CD4-positive, alpha-beta T cell (primary cell): ENCODE measurements at regions of chr17 and their contacts with region 1.

Region 1: DNA sequence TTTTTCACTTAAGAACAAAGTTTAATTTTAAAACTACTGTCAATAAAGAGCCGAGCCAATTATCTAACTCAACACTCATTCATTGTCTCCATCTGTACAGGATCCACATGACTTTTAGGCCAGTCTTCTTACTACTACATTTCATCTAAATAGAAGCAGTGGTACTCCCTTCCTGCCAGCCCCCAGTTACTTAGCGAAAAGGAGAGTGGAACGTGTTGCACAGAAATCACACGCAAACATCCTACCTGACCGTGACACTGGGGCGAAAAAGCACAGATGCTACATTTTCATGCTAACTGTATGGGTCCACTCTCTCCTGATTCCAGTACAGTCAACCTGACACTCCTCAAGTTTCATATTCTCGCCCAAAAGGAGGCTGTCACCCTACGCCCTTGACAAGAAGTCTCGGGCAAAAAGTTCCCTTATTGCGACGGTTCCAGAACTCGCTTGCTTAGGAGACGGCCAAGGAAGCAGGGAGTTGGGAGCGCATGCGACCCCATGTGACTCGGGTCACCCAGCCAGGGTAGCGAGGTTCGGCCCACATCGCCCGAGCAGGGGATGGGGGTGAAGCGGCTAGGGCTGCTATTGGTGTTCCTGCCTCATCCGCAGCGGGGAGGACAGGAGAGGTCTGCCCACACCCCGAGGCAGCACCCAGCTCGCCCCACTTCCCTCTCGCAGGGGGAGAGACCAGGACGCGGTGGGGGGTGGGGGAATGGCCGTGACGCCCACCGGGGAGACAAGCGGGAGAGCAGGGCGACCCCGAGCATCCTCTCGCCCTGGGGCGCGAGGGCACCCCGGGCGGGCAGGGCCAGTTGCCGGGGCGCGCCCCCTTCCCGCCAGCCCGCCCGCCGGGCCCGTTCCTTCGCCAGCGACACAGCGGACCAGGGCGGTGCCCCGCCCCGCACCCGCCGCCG is 935 bp downstream of the GNA13 start:
- DNase-seq: peak; percentile 26 to 72 (median 49)
- ATAC-seq: peak; percentile 31
- H3K4me3 ChIP-seq: peak overlapping the region; percentile 96
- H3K4me3 Mint-ChIP-seq: peak overlapping the region; percentile 99
- H3K27ac ChIP-seq: peak overlapping the region; percentile 95 to 96
- H3K27ac Mint-ChIP-seq: peak overlapping the region; percentile 97
- H3K4me1 ChIP-seq: peaks cover 32% of the 10 kb centered on the region
- H3K4me1 Mint-ChIP-seq: peaks cover 50% of the 10 kb centered on the region
- H3K27me3 ChIP-seq: no peaks in the 10 kb centered on the region
- H3K27me3 Mint-ChIP-seq: no peaks in the 10 kb centered on the region
- CTCF ChIP-seq: no peak

Region 2: GRCh38 chr17:64920026-64920418 is 135.6 kb before region 1 on chr17:
- CTCF ChIA-PET with region 1: no interaction called
- POLR2A ChIA-PET with region 1: interaction called, 7 read pairs
- intact Hi-C with region 1: loop called in 1 of 2 experiments (anchors 5 kb)
- DNase-seq: peak in 2 of 14 experiments; percentile 14 to 39
- ATAC-seq: no peak
- H3K4me3 ChIP-seq: peak overlapping the region; percentile 60
- H3K4me3 Mint-ChIP-seq: peak overlapping the region; percentile 91
- H3K27ac ChIP-seq: peak overlapping the region in 1 of 2 donors; percentile 65
- H3K27ac Mint-ChIP-seq: peak overlapping the region; percentile 83
- H3K4me1 ChIP-seq: peaks cover 13% of the 10 kb centered on the region
- H3K4me1 Mint-ChIP-seq: no peaks in the 10 kb centered on the region
- H3K27me3 ChIP-seq: no peaks in the 10 kb centered on the region
- H3K27me3 Mint-ChIP-seq: no peaks in the 10 kb centered on the region
- CTCF ChIP-seq: no peak

Region 3: GRCh38 chr17:64975329-64976087 is 80.1 kb before region 1 on chr17:
- CTCF ChIA-PET with region 1: no interaction called
- POLR2A ChIA-PET with region 1: interaction called, 65 read pairs
- intact Hi-C with region 1: loop called (anchors 2 kb)
- DNase-seq: peak; percentile 93 to 100 (median 97)
- ATAC-seq: peak; percentile 77
- H3K4me3 ChIP-seq: peak overlapping the region; percentile 84
- H3K4me3 Mint-ChIP-seq: peak overlapping the region; percentile 93
- H3K27ac ChIP-seq: peak overlapping the region; percentile 98 to 99
- H3K27ac Mint-ChIP-seq: peak overlapping the region; percentile 99
- H3K4me1 ChIP-seq: peaks cover 37% of the 10 kb centered on the region
- H3K4me1 Mint-ChIP-seq: peaks cover 45% of the 10 kb centered on the region
- H3K27me3 ChIP-seq: no peaks in the 10 kb centered on the region
- H3K27me3 Mint-ChIP-seq: no peaks in the 10 kb centered on the region
- CTCF ChIP-seq: no peak

Region 4: DNA sequence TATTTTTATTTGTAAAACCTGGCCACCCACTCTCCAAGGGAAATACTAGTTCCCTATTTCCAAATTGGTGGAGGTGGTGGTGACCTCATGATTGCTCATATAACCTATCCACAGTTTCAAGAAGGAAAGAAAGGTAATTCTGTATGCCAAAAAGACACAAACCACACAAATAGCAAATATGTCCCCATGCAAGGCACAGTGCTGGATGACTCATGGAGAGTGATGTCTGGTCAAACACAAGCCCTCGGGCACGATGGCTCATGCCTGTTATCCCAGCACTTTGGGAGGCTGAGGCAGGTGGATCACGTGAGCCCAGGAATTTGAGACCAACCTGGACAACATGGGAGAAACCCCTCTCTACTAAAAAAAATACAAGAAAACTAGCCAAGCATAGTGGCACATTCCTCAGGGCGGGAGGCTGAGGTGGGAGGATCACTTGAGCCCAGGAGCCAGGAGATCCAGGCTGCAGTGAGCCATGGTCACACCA is 63.2 kb before region 1 on chr17:
- CTCF ChIA-PET with region 1: no interaction called
- POLR2A ChIA-PET with region 1: no interaction called
- intact Hi-C with region 1: no loop called
- DNase-seq: no peak
- ATAC-seq: no peak
- H3K4me3 ChIP-seq: no peak overlapping the region
- H3K4me3 Mint-ChIP-seq: no peak overlapping the region
- H3K27ac ChIP-seq: no peak overlapping the region
- H3K27ac Mint-ChIP-seq: no peak overlapping the region
- H3K4me1 ChIP-seq: no peaks in the 10 kb centered on the region
- H3K4me1 Mint-ChIP-seq: no peaks in the 10 kb centered on the region
- H3K27me3 ChIP-seq: no peaks in the 10 kb centered on the region
- H3K27me3 Mint-ChIP-seq: no peaks in the 10 kb centered on the region
- CTCF ChIP-seq: no peak

Region 5: DNA sequence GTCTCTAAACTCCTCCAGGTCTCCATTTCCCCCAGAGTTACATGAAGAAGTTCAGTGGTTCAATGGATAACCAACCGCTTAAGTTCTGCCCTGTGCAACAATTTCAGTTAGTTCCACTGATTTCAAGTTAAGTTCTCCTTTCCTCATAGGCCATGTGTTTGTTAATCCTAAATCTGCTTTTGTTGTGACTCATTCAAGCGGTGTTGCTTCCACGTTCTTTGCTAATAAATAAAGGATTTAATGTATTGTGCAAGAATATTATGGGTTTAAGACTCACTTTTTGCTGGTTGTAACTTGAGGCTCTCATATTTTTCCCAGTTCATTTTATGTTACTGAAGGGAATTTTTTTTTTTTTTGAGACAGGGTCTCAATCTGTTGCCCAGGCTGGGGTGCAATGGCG is 35.3 kb before region 1 on chr17:
- CTCF ChIA-PET with region 1: no interaction called
- POLR2A ChIA-PET with region 1: interaction called, 5 read pairs
- intact Hi-C with region 1: loop called in 1 of 2 experiments (anchors 5 kb)
- DNase-seq: peak in 2 of 14 experiments; percentile 32 to 44
- ATAC-seq: no peak
- H3K4me3 ChIP-seq: no peak overlapping the region
- H3K4me3 Mint-ChIP-seq: no peak overlapping the region
- H3K27ac ChIP-seq: no peak overlapping the region
- H3K27ac Mint-ChIP-seq: peak overlapping the region; percentile 2
- H3K4me1 ChIP-seq: peaks cover 32% of the 10 kb centered on the region
- H3K4me1 Mint-ChIP-seq: peaks cover 90% of the 10 kb centered on the region
- H3K27me3 ChIP-seq: no peaks in the 10 kb centered on the region
- H3K27me3 Mint-ChIP-seq: no peaks in the 10 kb centered on the region
- CTCF ChIP-seq: no peak

Region 6: GRCh38 chr17:65039336-65039988 is 16.1 kb before region 1 on chr17:
- CTCF ChIA-PET with region 1: no interaction called
- POLR2A ChIA-PET with region 1: interaction called, 26 read pairs
- intact Hi-C with region 1: loop called (anchors 1 to 2 kb)
- DNase-seq: peak in 13 of 14 experiments; percentile 20 to 92 (median 47)
- ATAC-seq: peak; percentile 90
- H3K4me3 ChIP-seq: peak overlapping the region; percentile 28
- H3K4me3 Mint-ChIP-seq: peak overlapping the region; percentile 55
- H3K27ac ChIP-seq: peak overlapping the region; percentile 74 to 81
- H3K27ac Mint-ChIP-seq: peak overlapping the region; percentile 89
- H3K4me1 ChIP-seq: peaks cover 75% of the 10 kb centered on the region
- H3K4me1 Mint-ChIP-seq: peaks cover 81% of the 10 kb centered on the region
- H3K27me3 ChIP-seq: no peaks in the 10 kb centered on the region
- H3K27me3 Mint-ChIP-seq: no peaks in the 10 kb centered on the region
- CTCF ChIP-seq: no peak

Region 7: DNA sequence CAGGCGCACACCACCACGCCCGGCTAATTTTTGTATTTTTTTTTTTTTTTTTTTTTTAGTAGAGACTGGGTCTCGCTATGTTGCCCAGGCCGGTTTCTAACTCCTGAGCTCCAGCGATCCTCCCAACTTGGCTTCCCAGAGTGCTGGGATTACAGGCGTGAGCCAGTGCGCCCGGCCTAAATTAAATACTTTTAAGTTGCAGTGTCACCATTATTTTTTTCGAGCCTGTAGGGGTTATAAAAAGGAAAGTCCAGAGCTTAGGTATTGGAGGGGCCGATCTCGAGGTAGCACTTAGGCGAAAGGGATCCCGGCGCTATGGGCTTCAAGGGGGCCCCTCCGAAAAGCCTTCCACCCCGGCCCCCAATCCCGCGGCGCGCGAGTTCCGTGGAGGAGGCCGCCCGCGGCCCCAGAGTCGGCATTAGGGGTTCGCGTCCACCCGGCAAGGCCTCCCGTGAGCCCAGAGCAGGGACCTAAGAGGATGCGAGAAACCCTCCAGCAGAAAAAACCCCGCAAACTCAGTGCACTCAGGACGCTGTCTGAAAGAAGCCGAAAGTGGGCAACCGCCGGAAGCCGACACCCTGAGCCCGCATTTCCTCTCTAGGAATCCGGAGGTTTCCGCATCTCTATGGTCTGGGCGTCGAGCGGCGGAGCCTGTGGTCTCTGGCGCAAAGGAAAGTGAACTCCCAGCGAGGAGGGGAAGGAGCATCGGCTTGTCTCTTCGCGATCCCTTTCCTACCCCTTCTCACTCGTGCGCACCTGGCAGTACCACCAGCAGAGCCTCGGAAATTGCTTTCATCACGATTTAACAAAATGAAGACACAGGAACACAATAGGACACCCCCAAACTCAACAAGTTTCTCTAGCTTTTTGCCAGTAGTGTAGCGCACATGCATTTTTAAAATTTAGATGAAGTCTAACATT is 67.5 kb after region 1 on chr17:
- CTCF ChIA-PET with region 1: no interaction called
- POLR2A ChIA-PET with region 1: interaction called, 12 read pairs
- intact Hi-C with region 1: loop called (anchors 5 kb)
- DNase-seq: peak; percentile 72 to 93 (median 77)
- ATAC-seq: peak; percentile 95
- H3K4me3 ChIP-seq: peak overlapping the region; percentile 81
- H3K4me3 Mint-ChIP-seq: peak overlapping the region; percentile 88
- H3K27ac ChIP-seq: peak overlapping the region; percentile 52 to 87
- H3K27ac Mint-ChIP-seq: peak overlapping the region; percentile 87
- H3K4me1 ChIP-seq: peaks cover 15% of the 10 kb centered on the region
- H3K4me1 Mint-ChIP-seq: peaks cover 14% of the 10 kb centered on the region
- H3K27me3 ChIP-seq: no peaks in the 10 kb centered on the region
- H3K27me3 Mint-ChIP-seq: peaks cover 10% of the 10 kb centered on the region
- CTCF ChIP-seq: no peak

Region 8: GRCh38 chr17:65389953-65390352 is 334.3 kb after region 1 on chr17:
- CTCF ChIA-PET with region 1: no interaction called
- POLR2A ChIA-PET with region 1: no interaction called
- intact Hi-C with region 1: no loop called
- DNase-seq: no peak
- ATAC-seq: no peak
- H3K4me3 ChIP-seq: no peak overlapping the region
- H3K4me3 Mint-ChIP-seq: no peak overlapping the region
- H3K27ac ChIP-seq: no peak overlapping the region
- H3K27ac Mint-ChIP-seq: no peak overlapping the region
- H3K4me1 ChIP-seq: peaks cover 6% of the 10 kb centered on the region
- H3K4me1 Mint-ChIP-seq: peaks cover 19% of the 10 kb centered on the region
- H3K27me3 ChIP-seq: no peaks in the 10 kb centered on the region
- H3K27me3 Mint-ChIP-seq: no peaks in the 10 kb centered on the region
- CTCF ChIP-seq: no peak